ENCODE measurements at regions of chr22 and their contacts with region 1.

Region 1: DNA sequence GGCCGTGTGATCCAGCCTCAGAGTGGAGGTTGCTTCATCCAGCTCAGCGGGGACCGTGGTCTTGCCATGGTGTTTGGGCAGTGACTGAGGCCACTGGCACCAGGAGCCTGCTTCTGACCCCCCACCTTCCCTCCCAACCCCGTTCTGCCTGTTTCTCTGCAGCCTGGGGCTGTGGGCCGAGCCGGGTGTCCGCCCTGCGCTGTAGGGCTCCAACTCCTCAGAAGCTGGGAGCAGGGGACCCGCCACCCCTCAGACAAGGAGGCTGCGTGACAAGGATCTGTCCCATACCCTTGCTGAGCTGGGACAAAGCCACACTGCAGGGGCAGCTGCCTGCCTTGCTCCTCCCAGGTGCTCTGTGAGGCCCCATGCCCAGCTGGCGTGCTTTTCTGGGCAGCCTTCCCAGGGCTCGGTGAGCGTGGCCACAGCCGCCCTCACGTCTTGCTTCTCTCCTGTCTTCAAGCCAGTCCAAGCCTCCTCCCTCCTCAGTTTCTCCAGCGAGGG is 11.7 kb upstream of the ARFGAP3 start:
- DNase-seq: no peak
- ATAC-seq: no peak
- H3K4me3 ChIP-seq: no peak overlapping the region
- H3K27ac ChIP-seq: no peak overlapping the region
- H3K4me1 ChIP-seq: peaks cover 9% of the 10 kb centered on the region; the same call in 1 of the 2 replicates
- H3K27me3 ChIP-seq: no peaks in the 10 kb centered on the region
- CTCF ChIP-seq: no peak
- EP300 ChIP-seq: no peak
- POLR2A ChIP-seq: no peak
- RAD21 ChIP-seq: no peak

Region 2: DNA sequence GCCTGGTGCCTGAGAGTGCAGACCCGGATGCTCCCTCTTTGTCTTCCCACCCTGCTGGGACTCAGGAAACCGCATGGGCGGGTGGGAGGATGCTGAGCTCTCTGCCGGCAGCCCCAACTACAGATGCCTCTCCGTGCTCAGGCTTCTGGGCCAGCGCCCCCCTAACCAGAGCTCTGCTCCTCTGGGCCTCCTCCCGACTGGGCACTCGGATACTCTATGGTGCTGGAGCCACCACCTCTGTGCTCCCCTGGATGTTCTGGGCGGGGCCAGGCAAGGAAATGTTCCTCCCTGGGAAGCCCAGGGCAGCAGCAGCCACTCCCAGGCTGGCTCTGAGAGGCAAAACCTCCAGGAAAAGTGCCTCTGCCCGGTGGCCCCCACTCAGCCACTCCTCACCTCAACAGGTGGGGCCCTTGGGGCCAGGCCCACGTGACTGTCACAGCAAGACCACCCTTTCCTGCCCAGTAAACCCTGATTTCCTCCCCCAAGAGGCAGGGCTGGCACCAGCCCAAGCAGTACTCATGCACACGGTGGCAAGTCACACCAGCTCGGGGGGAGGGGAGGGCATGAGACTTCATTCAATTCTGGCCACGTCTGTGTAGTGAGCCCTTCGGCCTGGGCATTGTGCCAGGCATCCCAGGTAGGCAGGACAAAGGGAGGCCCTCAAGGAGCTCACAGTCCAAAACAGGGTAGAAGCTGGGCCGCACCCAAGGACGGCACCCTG is 543.7 kb before region 1 on chr22:
- CTCF ChIA-PET with region 1: no interaction called
- POLR2A ChIA-PET with region 1: no interaction called
- in situ Hi-C with region 1: no loop called
- intact Hi-C with region 1: no loop called
- DNase-seq: no peak
- ATAC-seq: no peak
- H3K4me3 ChIP-seq: no peak overlapping the region
- H3K27ac ChIP-seq: no peak overlapping the region
- H3K4me1 ChIP-seq: no peaks in the 10 kb centered on the region; the same call in 1 of the 2 replicates
- H3K27me3 ChIP-seq: peaks cover 0 to 33% of the 10 kb centered on the region in 2 experiments; a peak in 3 of 5 replicates
- CTCF ChIP-seq: no peak
- EP300 ChIP-seq: no peak
- POLR2A ChIP-seq: no peak
- RAD21 ChIP-seq: no peak

Region 3: DNA sequence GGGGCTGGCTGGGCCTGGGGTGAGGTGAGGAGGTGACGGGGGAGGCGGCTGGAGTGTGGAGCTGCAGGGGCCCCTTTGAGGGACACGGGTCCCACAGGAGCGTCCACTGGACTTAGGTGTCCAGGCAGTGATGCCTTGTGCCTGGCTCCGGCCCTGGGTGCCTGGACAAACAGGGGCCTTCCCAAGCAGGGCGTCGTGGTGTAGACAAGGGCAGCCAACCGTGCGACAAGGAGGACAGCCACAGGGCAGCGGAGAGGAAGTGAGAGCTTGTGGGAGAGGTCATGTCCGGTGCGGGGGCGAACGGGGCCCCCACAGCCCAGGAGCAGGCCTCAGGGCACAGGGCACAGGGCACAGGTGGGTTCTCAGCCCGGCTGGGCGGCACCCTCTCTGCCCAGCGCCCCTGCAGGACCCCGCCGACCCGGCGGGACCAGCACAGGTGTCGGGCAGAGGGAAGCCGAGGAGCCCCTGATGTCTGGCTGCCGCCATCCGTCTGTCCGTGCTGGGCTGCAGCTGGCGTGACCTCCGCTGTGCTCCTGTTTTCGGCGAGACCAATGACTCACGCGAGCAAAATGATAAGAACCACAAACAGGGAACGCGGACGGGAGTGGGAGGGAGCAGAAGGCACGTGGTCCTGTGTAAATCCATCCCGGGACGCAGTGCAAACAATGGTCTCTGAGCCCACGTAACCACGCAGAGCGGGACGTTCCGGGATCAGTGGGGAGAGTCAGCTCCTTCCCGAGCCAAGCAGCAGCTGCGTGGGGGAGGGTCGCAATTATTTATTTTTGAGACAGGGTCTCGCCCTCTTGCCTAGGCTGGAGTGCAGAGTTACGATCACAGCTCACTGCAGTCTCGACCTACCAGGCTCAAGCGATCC is 99.0 kb before region 1 on chr22:
- CTCF ChIA-PET with region 1: no interaction called
- POLR2A ChIA-PET with region 1: no interaction called
- in situ Hi-C with region 1: loop called (anchors 5 kb)
- intact Hi-C with region 1: no loop called
- DNase-seq: no peak
- ATAC-seq: peak; percentile 53
- H3K4me3 ChIP-seq: peak overlapping the region in 2 of 3 experiments; percentile 4 to 54; a peak in 3 of 6 replicates
- H3K27ac ChIP-seq: no peak overlapping the region
- H3K4me1 ChIP-seq: peaks cover 76% of the 10 kb centered on the region
- H3K27me3 ChIP-seq: peaks cover 2 to 8% of the 10 kb centered on the region in 2 experiments; a peak in 3 of 5 replicates
- CTCF ChIP-seq: no peak
- EP300 ChIP-seq: peak in 1 of 2 experiments; percentile 11; a peak in 1 of 4 replicates
- POLR2A ChIP-seq: no peak
- RAD21 ChIP-seq: no peak

Region 4: GRCh38 chr22:42834177-42834949 is 34.4 kb before region 1 on chr22:
- CTCF ChIA-PET with region 1: no interaction called
- POLR2A ChIA-PET with region 1: no interaction called
- in situ Hi-C with region 1: no loop called
- intact Hi-C with region 1: no loop called
- DNase-seq: no peak
- ATAC-seq: no peak
- H3K4me3 ChIP-seq: no peak overlapping the region
- H3K27ac ChIP-seq: no peak overlapping the region
- H3K4me1 ChIP-seq: no peaks in the 10 kb centered on the region
- H3K27me3 ChIP-seq: no peaks in the 10 kb centered on the region
- CTCF ChIP-seq: no peak
- EP300 ChIP-seq: no peak
- POLR2A ChIP-seq: no peak
- RAD21 ChIP-seq: no peak

Region 5: GRCh38 chr22:42844756-42845155 is 24.0 kb before region 1 on chr22:
- CTCF ChIA-PET with region 1: no interaction called
- POLR2A ChIA-PET with region 1: no interaction called
- in situ Hi-C with region 1: no loop called
- intact Hi-C with region 1: no loop called
- DNase-seq: no peak
- ATAC-seq: no peak
- H3K4me3 ChIP-seq: no peak overlapping the region
- H3K27ac ChIP-seq: no peak overlapping the region
- H3K4me1 ChIP-seq: peaks cover 10% of the 10 kb centered on the region
- H3K27me3 ChIP-seq: no peaks in the 10 kb centered on the region
- CTCF ChIP-seq: no peak
- EP300 ChIP-seq: no peak
- POLR2A ChIP-seq: no peak
- RAD21 ChIP-seq: no peak

Region 6: GRCh38 chr22:42856865-42857704 is 11.7 kb before region 1 on chr22 and contains the start of gene ARFGAP3:
- CTCF ChIA-PET with region 1: interaction called, 3 read pairs
- POLR2A ChIA-PET with region 1: interaction called, 11 read pairs
- in situ Hi-C with region 1: no loop called
- intact Hi-C with region 1: no loop called
- DNase-seq: peak; percentile 72
- ATAC-seq: peak; percentile 88
- H3K4me3 ChIP-seq: peak within 1 kb of the TSS; percentile 95 to 98 (median 96)
- H3K27ac ChIP-seq: peak within 1 kb of the TSS; percentile 94
- H3K4me1 ChIP-seq: peaks cover 39% of the 10 kb centered on the region
- H3K27me3 ChIP-seq: no peaks in the 10 kb centered on the region; a peak in 1 of 5 replicates
- CTCF ChIP-seq: no peak
- EP300 ChIP-seq: no peak; a peak in 1 of 4 replicates
- POLR2A ChIP-seq: peak; percentile 78 to 87
- RAD21 ChIP-seq: no peak; the same call in 1 of the 2 replicates
- total RNA-seq, gene ARFGAP3: 41.7 and 66.7 TPM in 2 replicates

Region 7: DNA sequence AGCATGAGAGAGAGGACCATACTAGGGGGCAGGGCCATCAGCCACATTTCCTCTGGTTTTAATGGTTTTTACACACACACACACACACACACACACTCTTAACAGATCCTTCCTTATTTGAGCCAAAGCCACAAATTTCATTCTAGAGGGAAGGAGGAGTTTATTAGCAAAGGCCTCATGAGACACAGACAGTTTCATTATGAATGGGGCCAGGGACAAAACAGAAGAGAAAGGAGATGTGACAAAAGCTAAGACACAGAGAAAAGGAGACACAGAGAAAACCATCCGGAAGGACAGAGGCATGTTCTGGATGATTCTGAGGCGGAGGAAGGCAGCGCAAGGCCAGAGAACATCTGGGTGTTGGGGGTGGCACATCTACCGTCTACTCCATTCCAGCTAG is 20.5 kb after region 1 on chr22:
- CTCF ChIA-PET with region 1: no interaction called
- POLR2A ChIA-PET with region 1: no interaction called
- in situ Hi-C with region 1: no loop called
- intact Hi-C with region 1: no loop called
- DNase-seq: no peak
- ATAC-seq: no peak
- H3K4me3 ChIP-seq: no peak overlapping the region
- H3K27ac ChIP-seq: no peak overlapping the region
- H3K4me1 ChIP-seq: no peaks in the 10 kb centered on the region
- H3K27me3 ChIP-seq: no peaks in the 10 kb centered on the region
- CTCF ChIP-seq: no peak
- EP300 ChIP-seq: no peak
- POLR2A ChIP-seq: no peak
- RAD21 ChIP-seq: no peak